ENCODE measurements at regions of chr4 and their contacts with region 1.

Region 1: DNA sequence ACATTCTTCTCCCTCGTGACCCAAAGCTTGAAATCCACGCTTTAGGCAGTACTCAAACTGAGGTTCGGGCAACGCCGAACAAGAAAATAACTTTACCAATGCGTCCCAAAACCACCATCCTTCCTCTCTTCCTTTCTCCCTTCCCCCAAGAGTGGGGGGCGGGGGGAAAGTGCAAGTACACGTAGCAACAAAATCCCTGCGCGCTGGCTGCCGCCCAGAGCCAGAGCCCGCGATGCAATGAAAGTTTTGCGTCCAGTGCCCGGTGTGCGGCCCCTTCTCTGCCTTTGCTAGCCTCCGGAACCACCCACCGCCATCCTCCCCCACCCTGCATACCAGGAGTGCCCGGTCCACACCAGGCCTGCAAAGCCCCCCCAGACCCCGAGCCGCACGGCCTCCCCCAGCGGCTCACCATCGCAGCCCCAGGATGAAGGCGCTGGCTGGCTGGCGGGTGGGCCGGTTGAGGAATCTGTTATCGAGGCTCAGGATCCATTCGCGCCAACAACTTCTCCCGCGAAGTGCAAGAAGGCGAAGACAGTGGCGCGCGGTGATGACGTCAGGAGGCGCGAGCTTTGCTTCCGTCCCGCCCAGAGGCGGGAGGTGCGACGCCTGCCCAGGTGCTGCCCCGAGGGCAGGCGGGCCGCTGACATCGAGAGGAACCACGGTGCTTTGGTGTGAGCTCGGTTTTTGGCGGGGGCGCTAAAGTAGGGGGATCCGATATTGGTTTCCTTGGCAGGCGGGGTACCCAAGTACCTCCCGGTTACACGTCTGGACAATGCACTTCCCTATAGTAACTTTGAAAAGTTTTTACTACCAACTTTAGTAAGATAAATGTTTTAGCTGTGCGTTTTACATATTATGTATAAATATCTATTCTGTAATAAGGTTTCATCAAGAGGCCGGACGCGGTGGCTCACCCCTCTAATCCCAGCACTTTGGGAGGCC is at the start of gene RFC1:
- DNase-seq: peak; percentile 89
- H3K4me3 ChIP-seq: peak within 1 kb of the TSS; percentile 82 to 85
- H3K27ac ChIP-seq: peak within 1 kb of the TSS; percentile 84 to 86
- H3K4me1 ChIP-seq: no peaks in the 10 kb centered on the region
- H3K27me3 ChIP-seq: no peaks in the 10 kb centered on the region
- CTCF ChIP-seq: peak in 1 of 4 experiments; percentile 11
- POLR2A ChIP-seq: peak; percentile 53
- total RNA-seq, gene RFC1: 27.7 to 33.3 TPM

Region 2: DNA sequence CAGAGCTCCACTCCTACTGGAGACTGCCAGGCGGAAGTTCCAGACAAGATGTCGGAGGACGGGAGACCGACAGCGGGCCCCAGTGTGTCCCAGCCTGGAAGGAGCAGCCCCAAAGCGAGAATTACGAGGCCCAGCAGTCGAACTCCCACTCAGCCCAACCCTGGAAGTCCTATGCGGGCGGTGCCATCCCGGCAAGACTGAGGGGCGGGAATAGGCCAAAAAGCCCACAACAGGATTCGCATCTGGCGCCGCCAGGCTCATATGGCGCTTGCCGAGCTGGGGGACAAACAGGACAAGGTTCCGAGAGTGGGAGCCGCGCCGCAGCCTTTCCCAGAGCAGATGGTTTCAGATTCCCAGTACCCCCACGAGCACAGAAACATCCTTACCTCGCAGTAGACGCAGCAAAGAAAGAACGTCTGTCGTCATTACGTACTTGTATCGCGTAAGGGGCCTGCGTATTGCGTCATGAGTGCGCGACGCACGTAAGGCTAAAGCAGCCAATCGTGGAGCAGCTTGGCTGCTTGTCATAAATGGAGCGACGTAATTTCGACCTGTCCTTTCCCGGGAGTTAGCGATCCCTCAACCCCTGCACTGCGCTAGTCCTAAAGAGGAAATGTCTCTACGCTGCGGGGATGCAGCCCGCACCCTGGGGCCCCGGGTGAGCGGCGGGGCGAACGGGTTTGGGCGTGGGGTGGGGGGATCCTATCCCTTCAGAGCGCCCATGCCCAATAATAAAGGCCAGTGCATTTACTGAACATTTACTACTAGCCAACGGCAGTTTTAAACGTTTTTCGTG is 92.6 kb after region 1 on chr4 and contains the starts of genes LIAS and RPL9:
- intact Hi-C with region 1: loop called (anchors 10 kb)
- DNase-seq: peak; percentile 95
- H3K4me3 ChIP-seq: peak within 1 kb of the TSS; percentile 68 to 75
- H3K27ac ChIP-seq: peak within 1 kb of the TSS; percentile 92 to 94
- H3K4me1 ChIP-seq: peaks cover 6% of the 10 kb centered on the region
- H3K27me3 ChIP-seq: no peaks in the 10 kb centered on the region
- CTCF ChIP-seq: no peak
- POLR2A ChIP-seq: peak; percentile 89
- total RNA-seq, gene LIAS: 11.2 to 15.3 TPM
- total RNA-seq, gene RPL9: 1,563 to 5,624 TPM

Measured in prostate gland (tissue), 2 donors.